ENCODE measurements at regions of chr1 and their contacts with region 1.

Region 1: GRCh38 chr1:160031365-160032164 is at the start of gene PIGM:
- DNase-seq: peak; percentile 91
- H3K4me3 Mint-ChIP-seq: peak within 1 kb of the TSS; percentile 92
- H3K27ac Mint-ChIP-seq: peak within 1 kb of the TSS; percentile 76
- H3K4me1 Mint-ChIP-seq: peaks cover 29% of the 10 kb centered on the region
- H3K27me3 Mint-ChIP-seq: peaks cover 5% of the 10 kb centered on the region
- total RNA-seq, gene PIGM: 6.7 and 7.1 TPM in 2 replicates

Region 2: GRCh38 chr1:159554696-159555095 is 476.9 kb before region 1 on chr1:
- intact Hi-C with region 1: no loop called
- DNase-seq: no peak
- H3K4me3 Mint-ChIP-seq: no peak overlapping the region
- H3K27ac Mint-ChIP-seq: no peak overlapping the region
- H3K4me1 Mint-ChIP-seq: no peaks in the 10 kb centered on the region
- H3K27me3 Mint-ChIP-seq: no peaks in the 10 kb centered on the region

Region 3: GRCh38 chr1:159960721-159961381 is 70.7 kb before region 1 on chr1:
- intact Hi-C with region 1: no loop called
- DNase-seq: no peak
- H3K4me3 Mint-ChIP-seq: no peak overlapping the region
- H3K27ac Mint-ChIP-seq: no peak overlapping the region
- H3K4me1 Mint-ChIP-seq: peaks cover 10% of the 10 kb centered on the region
- H3K27me3 Mint-ChIP-seq: peaks cover 17% of the 10 kb centered on the region

Region 4: DNA sequence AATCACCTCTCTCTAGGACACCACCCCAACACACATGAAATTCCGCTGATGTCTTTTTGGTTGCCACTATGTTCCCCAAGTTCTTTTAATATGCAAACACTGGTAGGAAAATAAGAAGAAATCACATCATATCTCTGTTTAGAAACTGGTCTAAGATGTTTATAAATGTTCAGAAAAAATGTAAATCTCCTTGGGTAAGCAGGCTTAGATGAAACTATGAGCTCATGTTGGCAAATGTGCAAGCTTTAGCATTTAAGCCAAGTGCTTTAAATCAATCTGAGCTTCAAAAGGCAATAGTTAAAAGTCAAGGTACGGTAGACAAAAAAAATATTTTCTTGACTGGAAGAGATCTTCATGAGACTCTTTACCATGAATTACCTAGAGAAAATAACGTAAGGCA is 52.3 kb before region 1 on chr1:
- intact Hi-C with region 1: no loop called
- DNase-seq: no peak
- H3K4me3 Mint-ChIP-seq: no peak overlapping the region
- H3K27ac Mint-ChIP-seq: no peak overlapping the region
- H3K4me1 Mint-ChIP-seq: no peaks in the 10 kb centered on the region
- H3K27me3 Mint-ChIP-seq: peaks cover 38% of the 10 kb centered on the region

Region 5: GRCh38 chr1:160046494-160047110 is 15.0 kb after region 1 on chr1:
- intact Hi-C with region 1: no loop called
- DNase-seq: peak; percentile 26
- H3K4me3 Mint-ChIP-seq: peak overlapping the region; percentile 41
- H3K27ac Mint-ChIP-seq: peak overlapping the region; percentile 43
- H3K4me1 Mint-ChIP-seq: peaks cover 12% of the 10 kb centered on the region
- H3K27me3 Mint-ChIP-seq: peaks cover 17% of the 10 kb centered on the region

Region 6: DNA sequence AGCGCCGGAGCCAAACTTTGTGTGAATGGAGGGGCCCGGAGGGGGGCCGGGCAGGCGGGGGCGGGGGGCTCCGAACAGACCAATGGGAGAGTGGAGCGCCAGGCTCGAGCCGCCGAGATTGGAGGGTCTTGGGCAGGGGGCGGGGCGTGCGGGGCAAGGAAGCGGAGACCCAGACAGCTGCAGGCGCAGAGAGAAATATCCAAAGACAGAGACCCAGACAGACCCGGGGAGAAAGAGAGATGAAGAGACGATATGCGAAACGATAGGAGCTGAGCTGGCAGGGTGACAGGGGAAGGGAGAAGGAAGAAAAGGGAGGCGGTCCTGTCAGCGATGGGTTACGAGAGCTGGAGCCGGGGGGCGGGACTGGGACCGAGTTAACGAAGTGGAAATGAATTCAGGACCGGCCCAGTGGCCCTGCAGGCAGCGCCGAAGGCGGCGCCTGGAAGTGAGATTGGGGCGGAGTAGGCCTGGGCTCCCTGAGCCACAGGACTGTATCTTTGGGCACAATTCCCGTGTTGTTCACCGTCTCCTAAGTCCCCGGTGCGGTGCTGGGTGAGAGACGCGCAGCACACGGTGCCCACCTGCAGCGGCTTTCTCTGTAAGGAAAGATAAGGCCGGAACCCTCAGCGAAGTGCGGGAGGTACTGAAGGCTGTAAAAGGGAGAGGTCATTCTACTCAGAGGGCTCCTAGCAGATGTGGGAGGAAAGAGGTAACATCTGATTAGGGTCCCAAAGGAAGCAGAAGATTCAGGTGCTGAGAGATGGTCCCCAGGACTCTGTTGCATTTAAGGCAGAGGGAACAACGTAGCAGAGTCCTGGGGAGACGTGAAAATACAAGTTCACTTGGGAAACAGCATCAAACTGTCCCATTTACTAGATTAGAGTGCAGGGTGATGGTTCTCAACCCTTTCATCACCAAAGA is 38.9 kb after region 1 on chr1:
- intact Hi-C with region 1: loop called (anchors 5 kb)
- DNase-seq: peak; percentile 41
- H3K4me3 Mint-ChIP-seq: peak overlapping the region; percentile 77
- H3K27ac Mint-ChIP-seq: no peak overlapping the region
- H3K4me1 Mint-ChIP-seq: peaks cover 18% of the 10 kb centered on the region
- H3K27me3 Mint-ChIP-seq: peaks cover 33% of the 10 kb centered on the region

Measured in activated T-helper 2 cell treated with anti-CD3 and anti-CD28 coated beads, Interferon-gamma antibody, Interleukin-2, Interleukin-4, amounts not matched to agents 10 μg/mL and 5 μg/mL and 100 μg/mL, durations not matched to agents 14 hours and 24 hours and 36 hours (primary cell).